Activated CD4-positive, alpha-beta T cell treated with anti-CD3 and anti-CD28 coated beads, Interleukin-2, amount 10 ng/mL, durations not matched to agents 7 days and 5 days (primary cell): ENCODE measurements at regions of chr21 and their contacts with region 1.

Region 1: DNA sequence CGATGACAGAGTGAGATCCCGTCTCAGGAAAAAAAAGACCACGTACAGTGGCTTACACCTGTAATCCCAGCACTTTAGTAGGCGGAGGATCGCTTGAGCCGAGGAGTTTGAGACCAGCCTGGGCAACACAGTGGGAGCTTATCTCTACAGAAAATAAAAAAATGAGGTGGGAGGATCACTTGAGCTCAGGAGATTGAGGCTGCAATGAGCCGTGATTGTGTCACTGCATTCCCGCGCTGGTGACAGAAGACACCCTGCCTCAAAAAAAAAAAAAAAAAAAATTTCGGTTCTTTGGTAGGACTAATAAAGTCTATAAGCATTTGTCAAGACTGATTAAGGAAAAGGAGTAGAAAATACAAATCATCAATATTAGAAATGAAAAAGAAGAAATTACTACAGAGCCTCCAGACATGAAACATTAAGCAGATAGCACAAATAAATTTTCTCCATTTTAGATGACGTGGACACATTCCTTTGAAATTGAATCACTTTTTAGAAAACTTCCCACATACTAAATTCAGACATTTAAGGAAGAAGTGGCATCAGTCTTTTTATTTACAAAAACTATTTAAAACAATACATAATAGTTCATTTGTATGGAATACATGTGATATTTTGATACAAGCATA is 30.4 kb downstream of the MORC3 start:
- DNase-seq: no peak
- H3K4me3 Mint-ChIP-seq: no peak overlapping the region
- H3K27ac Mint-ChIP-seq: no peak overlapping the region
- H3K4me1 Mint-ChIP-seq: peaks cover 6% of the 10 kb centered on the region
- H3K27me3 Mint-ChIP-seq: no peaks in the 10 kb centered on the region

Region 2: DNA sequence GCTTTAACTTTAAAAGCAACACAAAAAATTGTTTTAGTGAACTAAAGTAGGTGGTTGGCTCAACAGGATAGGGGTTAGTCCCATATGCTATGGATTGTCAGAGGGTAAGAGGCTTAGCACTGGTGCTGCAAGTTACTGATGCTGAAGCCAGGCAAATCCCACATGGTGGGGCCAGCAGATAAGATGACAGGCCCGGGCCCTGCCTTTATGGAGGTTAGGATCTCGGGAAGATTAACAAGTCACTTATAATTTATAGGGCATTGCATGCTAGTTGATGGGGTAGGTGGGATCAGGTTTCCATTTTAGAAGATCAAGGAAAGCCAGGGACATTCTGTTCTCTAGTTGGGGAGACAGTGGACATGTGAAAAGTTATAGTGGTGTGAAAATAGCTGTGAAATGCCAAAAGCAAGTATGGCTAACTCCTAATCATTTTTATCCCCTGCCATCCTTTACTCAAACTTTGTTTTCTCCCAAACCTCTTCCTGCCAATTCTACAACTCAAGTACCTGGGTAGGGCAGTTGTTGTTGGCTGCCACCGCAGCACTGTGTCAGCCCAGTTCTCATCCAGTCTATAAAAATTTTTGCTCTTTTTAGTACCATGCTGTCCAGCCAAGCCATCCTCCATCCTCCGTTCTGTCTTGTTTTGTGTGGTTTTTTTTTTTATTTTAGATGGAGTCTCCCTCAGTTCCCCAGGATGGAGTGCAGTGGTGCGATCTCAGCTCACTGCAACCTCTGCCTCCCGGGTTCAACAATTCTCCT is 45.1 kb after region 1 on chr21:
- CTCF ChIA-PET with region 1: no interaction called
- POLR2A ChIA-PET with region 1: interaction called, 15 read pairs
- DNase-seq: no peak
- H3K4me3 Mint-ChIP-seq: no peak overlapping the region
- H3K27ac Mint-ChIP-seq: peak overlapping the region; percentile 42
- H3K4me1 Mint-ChIP-seq: no peaks in the 10 kb centered on the region
- H3K27me3 Mint-ChIP-seq: no peaks in the 10 kb centered on the region

Region 3: GRCh38 chr21:36450511-36450910 is 100.1 kb after region 1 on chr21:
- CTCF ChIA-PET with region 1: no interaction called
- POLR2A ChIA-PET with region 1: no interaction called
- DNase-seq: no peak
- H3K4me3 Mint-ChIP-seq: no peak overlapping the region
- H3K27ac Mint-ChIP-seq: no peak overlapping the region
- H3K4me1 Mint-ChIP-seq: no peaks in the 10 kb centered on the region
- H3K27me3 Mint-ChIP-seq: peaks cover 2% of the 10 kb centered on the region